Activated naive CD4-positive, alpha-beta T cell treated with anti-CD3 and anti-CD28 coated beads for 36 hours (primary cell): ENCODE measurements at regions of chr4 and their contacts with region 1.

Region 1: DNA sequence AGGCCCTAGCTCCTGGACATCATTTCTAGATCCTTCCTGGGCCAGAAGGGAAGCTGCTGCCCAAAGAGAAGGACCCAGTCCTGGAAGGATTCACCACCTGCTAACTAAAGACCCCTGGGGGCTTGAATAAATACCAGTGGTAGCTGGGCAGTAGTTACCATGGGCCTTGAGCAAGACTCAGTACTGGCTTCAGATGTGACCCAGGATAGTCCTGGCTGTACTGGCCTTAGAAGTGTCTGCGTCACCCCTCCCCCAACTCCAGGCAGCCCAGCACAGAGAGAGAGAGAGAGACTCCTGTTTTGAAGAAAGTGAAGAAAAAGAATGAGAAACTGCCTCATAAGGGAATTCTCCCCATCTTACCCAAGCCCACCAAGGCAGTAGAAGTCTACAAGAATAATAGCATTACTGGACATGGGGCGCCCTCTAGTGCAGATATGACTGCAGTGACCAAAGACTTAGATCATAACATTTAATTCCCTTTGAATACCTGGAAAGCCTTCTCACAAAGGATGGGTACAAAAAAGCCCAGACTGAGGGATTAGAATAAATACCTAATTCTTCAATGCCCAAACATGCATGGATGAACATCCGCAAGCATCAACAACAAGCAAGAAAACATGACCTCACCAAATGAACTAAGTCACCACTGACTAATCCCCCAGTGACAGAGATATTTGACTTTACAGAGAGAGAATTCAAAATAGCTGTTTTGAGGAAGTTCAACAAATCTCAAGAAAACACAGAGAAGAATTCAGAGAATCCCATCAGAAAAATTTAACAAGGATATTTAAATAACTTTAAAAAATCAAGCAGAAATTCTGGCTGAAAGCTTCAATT is 171.8 kb downstream of the HNRNPD start:
- DNase-seq: peak; percentile 77
- H3K4me3 Mint-ChIP-seq: no peak overlapping the region
- H3K27ac Mint-ChIP-seq: no peak overlapping the region
- H3K4me1 Mint-ChIP-seq: no peaks in the 10 kb centered on the region
- H3K27me3 Mint-ChIP-seq: no peaks in the 10 kb centered on the region

Region 2: GRCh38 chr4:81844717-81845116 is 357.3 kb before region 1 on chr4:
- CTCF ChIA-PET with region 1: interaction called, 6 read pairs
- intact Hi-C with region 1: loop called (anchors 1 kb)
- DNase-seq: peak; percentile 89
- H3K4me3 Mint-ChIP-seq: no peak overlapping the region
- H3K27ac Mint-ChIP-seq: no peak overlapping the region
- H3K4me1 Mint-ChIP-seq: peaks cover 13% of the 10 kb centered on the region
- H3K27me3 Mint-ChIP-seq: no peaks in the 10 kb centered on the region

Region 3: DNA sequence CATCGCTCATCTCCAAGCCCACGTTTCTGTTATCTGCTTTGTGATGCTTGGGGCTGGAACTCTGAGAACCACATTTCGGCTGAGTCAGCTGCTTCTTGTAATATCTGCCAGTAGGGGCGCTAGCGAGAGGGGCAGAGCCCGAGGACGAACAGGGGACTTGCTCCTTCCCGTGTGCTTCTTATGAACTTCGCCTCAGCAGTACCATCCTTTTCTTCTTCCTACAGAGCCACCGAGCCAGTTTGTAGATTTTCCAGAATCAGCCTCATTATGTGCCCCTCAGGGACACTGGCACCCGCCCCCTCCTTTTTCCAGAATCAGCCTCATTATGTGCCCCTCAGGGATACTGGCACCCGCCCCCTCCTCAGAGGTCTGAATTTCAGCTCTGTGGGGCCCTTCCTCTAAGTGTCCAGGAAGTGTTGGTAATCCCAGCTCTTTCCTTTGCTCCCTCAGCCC is 288.6 kb before region 1 on chr4:
- CTCF ChIA-PET with region 1: interaction called, 3 read pairs
- intact Hi-C with region 1: loop called (anchors 5 kb)
- DNase-seq: peak; percentile 74
- H3K4me3 Mint-ChIP-seq: no peak overlapping the region
- H3K27ac Mint-ChIP-seq: no peak overlapping the region
- H3K4me1 Mint-ChIP-seq: peaks cover 2% of the 10 kb centered on the region
- H3K27me3 Mint-ChIP-seq: peaks cover 8% of the 10 kb centered on the region

Region 4: GRCh38 chr4:82123934-82124333 is 78.1 kb before region 1 on chr4:
- CTCF ChIA-PET with region 1: no interaction called
- intact Hi-C with region 1: loop called (anchors 2 kb)
- DNase-seq: peak; percentile 28
- H3K4me3 Mint-ChIP-seq: no peak overlapping the region
- H3K27ac Mint-ChIP-seq: no peak overlapping the region
- H3K4me1 Mint-ChIP-seq: peaks cover 4% of the 10 kb centered on the region
- H3K27me3 Mint-ChIP-seq: no peaks in the 10 kb centered on the region